PC-9 (cell line): ENCODE measurements at regions of chr3 and their contacts with region 1.

Region 1: GRCh38 chr3:56629047-56629446 is 54.0 kb downstream of the TASOR start:
- DNase-seq: no peak
- H3K4me3 ChIP-seq: no peak overlapping the region
- H3K27ac ChIP-seq: no peak overlapping the region
- H3K4me1 ChIP-seq: no peaks in the 10 kb centered on the region
- H3K27me3 ChIP-seq: no peaks in the 10 kb centered on the region
- CTCF ChIP-seq: no peak

Region 2: DNA sequence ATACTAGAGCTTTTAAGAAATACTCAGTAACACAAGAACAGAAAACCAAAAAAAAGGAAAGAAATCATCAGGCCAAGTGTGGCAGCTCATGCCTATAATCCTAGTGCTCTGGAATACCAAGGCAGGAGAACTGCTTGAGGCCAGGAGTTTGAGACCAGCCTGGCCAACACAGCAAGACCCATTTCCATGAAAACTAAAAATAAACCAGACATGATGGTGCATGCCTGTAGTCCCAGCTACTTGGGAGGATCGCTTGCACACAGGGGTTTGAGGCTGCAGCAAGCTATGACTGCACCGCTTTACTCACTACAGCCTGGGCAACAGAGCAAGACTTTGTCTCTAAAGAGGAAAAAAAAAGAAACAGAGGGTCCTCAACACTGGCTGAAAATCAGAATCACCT is 35.8 kb after region 1 on chr3:
- CTCF ChIA-PET with region 1: no interaction called
- POLR2A ChIA-PET with region 1: no interaction called
- intact Hi-C with region 1: no loop called
- DNase-seq: no peak
- H3K4me3 ChIP-seq: no peak overlapping the region
- H3K27ac ChIP-seq: no peak overlapping the region
- H3K4me1 ChIP-seq: no peaks in the 10 kb centered on the region
- H3K27me3 ChIP-seq: no peaks in the 10 kb centered on the region
- CTCF ChIP-seq: no peak

Region 3: GRCh38 chr3:56682462-56683121 is 53.5 kb after region 1 on chr3:
- CTCF ChIA-PET with region 1: no interaction called
- POLR2A ChIA-PET with region 1: interaction called, 12 read pairs
- intact Hi-C with region 1: no loop called
- DNase-seq: peak; percentile 37 to 56
- H3K4me3 ChIP-seq: peak overlapping the region; percentile 76
- H3K27ac ChIP-seq: peak overlapping the region; percentile 84
- H3K4me1 ChIP-seq: peaks cover 26% of the 10 kb centered on the region
- H3K27me3 ChIP-seq: no peaks in the 10 kb centered on the region
- CTCF ChIP-seq: no peak

Region 4: GRCh38 chr3:56747150-56747549 is 118.1 kb after region 1 on chr3:
- CTCF ChIA-PET with region 1: no interaction called
- POLR2A ChIA-PET with region 1: no interaction called
- intact Hi-C with region 1: no loop called
- DNase-seq: no peak
- H3K4me3 ChIP-seq: no peak overlapping the region
- H3K27ac ChIP-seq: no peak overlapping the region
- H3K4me1 ChIP-seq: no peaks in the 10 kb centered on the region
- H3K27me3 ChIP-seq: no peaks in the 10 kb centered on the region
- CTCF ChIP-seq: no peak

Region 5: GRCh38 chr3:57910988-57911387 is 1281.9 kb after region 1 on chr3:
- CTCF ChIA-PET with region 1: interaction called, 12 read pairs
- POLR2A ChIA-PET with region 1: no interaction called
- intact Hi-C with region 1: no loop called
- DNase-seq: peak in 1 of 2 experiments; percentile 16
- H3K4me3 ChIP-seq: no peak overlapping the region
- H3K27ac ChIP-seq: no peak overlapping the region
- H3K4me1 ChIP-seq: 0 out of 2 replicates have a peak, but pooled peaks cover 10% of the 10 kb centered on the region
- H3K27me3 ChIP-seq: no peaks in the 10 kb centered on the region
- CTCF ChIP-seq: peak; percentile 54

Region 6: GRCh38 chr3:57968501-57968900 is 1339.5 kb after region 1 on chr3:
- CTCF ChIA-PET with region 1: no interaction called
- POLR2A ChIA-PET with region 1: interaction called, 14 read pairs
- intact Hi-C with region 1: no loop called
- DNase-seq: no peak
- H3K4me3 ChIP-seq: no peak overlapping the region
- H3K27ac ChIP-seq: peak overlapping the region; percentile 30; the same call in 1 of the 2 replicates
- H3K4me1 ChIP-seq: peaks cover 51% of the 10 kb centered on the region
- H3K27me3 ChIP-seq: no peaks in the 10 kb centered on the region
- CTCF ChIP-seq: no peak